HEK293T (cell line): ENCODE measurements at regions of chr4 and their contacts with region 1.

Region 1: GRCh38 chr4:133263082-133263481 is 114.0 kb downstream of the PCDH10 start:
- DNase-seq: no peak

Region 2: GRCh38 chr4:132683957-132684356 is 579.1 kb before region 1 on chr4:
- CTCF ChIA-PET with region 1: interaction called, 12 read pairs
- POLR2A ChIA-PET with region 1: no interaction called
- DNase-seq: no peak

Region 3: DNA sequence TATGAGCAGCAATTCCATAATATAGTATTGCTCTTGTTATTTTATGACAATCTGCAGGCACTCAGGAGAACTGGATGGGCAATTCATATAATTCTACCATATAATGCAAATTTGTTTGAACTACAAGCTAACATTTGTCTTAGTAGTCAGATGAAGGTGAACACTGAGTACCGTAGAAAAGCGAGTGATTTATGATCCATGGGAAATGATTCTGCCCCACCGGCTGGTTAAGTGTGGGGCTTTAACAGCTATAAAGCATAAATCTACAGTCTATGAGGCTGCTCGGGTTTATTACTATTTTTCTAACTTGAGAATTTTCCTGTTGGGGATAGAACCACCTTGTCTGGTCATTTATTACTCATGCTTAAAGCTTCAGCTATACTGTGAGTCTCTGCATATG is 161.5 kb after region 1 on chr4:
- CTCF ChIA-PET with region 1: no interaction called
- POLR2A ChIA-PET with region 1: no interaction called
- DNase-seq: peak; percentile 17